ENCODE measurements at regions of chr2 and their contacts with region 1.

Region 1: GRCh38 chr2:218485986-218486667 is 67.2 kb downstream of the VIL1 start:
- DNase-seq: no peak
- H3K4me3 ChIP-seq: no peak overlapping the region
- H3K27ac ChIP-seq: no peak overlapping the region
- H3K4me1 ChIP-seq: no peaks in the 10 kb centered on the region
- H3K27me3 ChIP-seq: no peaks in the 10 kb centered on the region
- CTCF ChIP-seq: no peak

Region 2: DNA sequence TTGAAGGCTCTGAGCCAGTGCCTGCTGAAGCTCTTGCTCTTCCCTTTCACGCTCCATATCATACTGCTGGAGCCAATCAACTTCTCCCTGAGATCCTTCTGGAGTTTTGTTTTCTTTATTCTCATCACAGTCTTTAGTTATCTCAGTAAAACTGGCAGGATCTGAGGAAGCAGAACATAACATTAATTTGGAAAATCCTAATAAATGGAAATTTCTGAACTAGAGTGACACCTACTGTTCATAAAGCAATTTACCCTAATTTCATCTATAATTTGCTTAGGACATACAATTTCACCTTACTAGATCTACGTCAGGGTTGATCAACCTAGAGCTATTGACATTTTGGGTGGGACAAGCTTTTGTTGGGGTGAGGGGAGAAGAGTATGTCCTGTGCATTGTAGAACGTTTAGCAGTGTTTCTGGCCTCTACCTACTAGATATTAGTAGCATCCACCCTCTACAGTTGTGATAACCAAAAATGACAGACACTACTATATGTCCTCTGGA is 20.1 kb before region 1 on chr2:
- CTCF ChIA-PET with region 1: interaction called, 16 read pairs
- POLR2A ChIA-PET with region 1: no interaction called
- intact Hi-C with region 1: no loop called
- DNase-seq: peak; percentile 40
- H3K4me3 ChIP-seq: no peak overlapping the region
- H3K27ac ChIP-seq: no peak overlapping the region
- H3K4me1 ChIP-seq: no peaks in the 10 kb centered on the region
- H3K27me3 ChIP-seq: no peaks in the 10 kb centered on the region
- CTCF ChIP-seq: peak; percentile 68

Region 3: DNA sequence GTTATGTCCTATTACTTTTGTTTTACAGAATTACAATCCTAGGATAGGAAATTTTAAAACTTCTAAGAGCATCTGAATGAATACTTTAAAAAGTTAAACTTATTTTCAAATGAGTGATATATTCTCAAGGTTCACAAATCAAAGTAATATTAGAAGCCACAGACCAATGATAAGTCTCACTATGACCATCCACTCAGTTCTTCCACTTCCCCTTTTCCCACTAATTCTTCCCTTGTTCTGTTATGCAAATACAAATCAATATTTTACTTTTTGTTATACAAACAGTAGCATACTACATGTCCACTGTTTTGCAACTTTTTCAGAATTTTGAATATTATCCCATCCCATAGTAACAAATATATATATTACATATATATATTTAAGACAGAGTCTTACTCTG is 61.9 kb after region 1 on chr2:
- CTCF ChIA-PET with region 1: no interaction called
- POLR2A ChIA-PET with region 1: no interaction called
- intact Hi-C with region 1: no loop called
- DNase-seq: no peak
- H3K4me3 ChIP-seq: no peak overlapping the region
- H3K27ac ChIP-seq: no peak overlapping the region
- H3K4me1 ChIP-seq: no peaks in the 10 kb centered on the region
- H3K27me3 ChIP-seq: no peaks in the 10 kb centered on the region
- CTCF ChIP-seq: no peak